GM12878 (cell line): ENCODE measurements at regions of chr1 and their contacts with region 1.

Region 1: DNA sequence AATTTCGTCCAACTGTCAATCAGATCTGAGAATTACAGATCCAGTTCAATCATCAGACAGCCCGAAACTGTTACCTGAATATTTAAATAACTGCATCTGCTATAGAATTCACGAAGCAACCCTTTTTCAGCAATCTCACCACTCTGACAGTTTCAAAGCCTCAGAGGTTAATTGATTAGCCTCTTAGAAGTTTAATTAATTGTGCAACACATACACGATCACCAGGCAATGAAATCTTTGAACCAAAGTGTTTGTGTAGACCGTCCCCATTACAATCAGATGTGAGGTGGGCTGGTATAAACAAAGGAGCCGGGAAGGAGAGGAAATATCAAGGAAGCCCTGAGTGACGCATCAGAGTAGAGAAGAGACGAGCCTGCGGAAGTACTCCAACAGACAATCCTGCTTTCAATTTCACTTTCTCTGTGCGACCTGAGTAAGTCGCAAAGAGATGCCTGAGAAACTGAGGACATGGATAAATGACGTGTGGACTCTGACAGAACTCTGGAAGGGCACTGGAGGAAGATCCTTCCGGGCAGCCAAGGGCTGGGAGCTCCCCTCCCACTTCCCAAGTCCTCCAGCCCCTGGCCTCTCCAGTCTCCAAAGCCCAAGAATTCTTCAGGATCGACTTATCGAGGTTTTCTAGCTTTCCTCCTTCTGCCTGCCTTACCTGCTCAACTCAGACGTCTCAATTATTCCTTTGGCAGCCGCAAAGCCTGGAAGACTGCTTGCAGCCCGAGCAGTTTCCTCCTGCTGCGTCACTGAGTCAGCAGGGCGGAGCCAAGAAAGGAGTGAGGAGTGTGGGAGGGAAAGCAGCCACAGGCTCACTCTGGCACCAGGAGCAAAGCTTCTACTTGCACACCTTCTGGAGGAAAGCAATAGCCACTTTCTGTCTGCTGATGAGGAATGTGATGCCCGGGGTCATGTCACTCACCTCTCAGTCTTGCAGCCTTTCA is at the start of gene RNASEL:
- DNase-seq: no peak
- ATAC-seq: peak; percentile 93
- H3K4me3 ChIP-seq: peak within 1 kb of the TSS; percentile 87
- H3K27ac ChIP-seq: peak within 1 kb of the TSS; percentile 63
- H3K4me1 ChIP-seq: peaks cover 5% of the 10 kb centered on the region; the same call in 1 of the 2 replicates
- H3K27me3 ChIP-seq: no peaks in the 10 kb centered on the region
- CTCF ChIP-seq: no peak
- EP300 ChIP-seq: no peak
- POLR2A ChIP-seq: peak; percentile 42
- RAD21 ChIP-seq: no peak
- polyA plus RNA-seq, gene RNASEL: 3.0 to 3.7 TPM

Region 2: GRCh38 chr1:182484591-182485257 is 104.1 kb before region 1 on chr1:
- CTCF ChIA-PET with region 1: interaction called, 4 read pairs
- POLR2A ChIA-PET with region 1: no interaction called
- RAD21 ChIA-PET with region 1: interaction called, 10 read pairs
- SMC1A ChIA-PET with region 1: interaction called, 3 read pairs
- in situ Hi-C with region 1: no loop called
- intact Hi-C with region 1: no loop called
- DNase-seq: peak; percentile 30
- ATAC-seq: peak; percentile 99
- H3K4me3 ChIP-seq: no peak overlapping the region
- H3K27ac ChIP-seq: no peak overlapping the region
- H3K4me1 ChIP-seq: no peaks in the 10 kb centered on the region
- H3K27me3 ChIP-seq: no peaks in the 10 kb centered on the region; a peak in 1 of 4 replicates
- CTCF ChIP-seq: peak; percentile 30 to 76 (median 70)
- EP300 ChIP-seq: no peak
- POLR2A ChIP-seq: no peak
- RAD21 ChIP-seq: peak; percentile 31; the same call in 1 of the 2 replicates

Region 3: DNA sequence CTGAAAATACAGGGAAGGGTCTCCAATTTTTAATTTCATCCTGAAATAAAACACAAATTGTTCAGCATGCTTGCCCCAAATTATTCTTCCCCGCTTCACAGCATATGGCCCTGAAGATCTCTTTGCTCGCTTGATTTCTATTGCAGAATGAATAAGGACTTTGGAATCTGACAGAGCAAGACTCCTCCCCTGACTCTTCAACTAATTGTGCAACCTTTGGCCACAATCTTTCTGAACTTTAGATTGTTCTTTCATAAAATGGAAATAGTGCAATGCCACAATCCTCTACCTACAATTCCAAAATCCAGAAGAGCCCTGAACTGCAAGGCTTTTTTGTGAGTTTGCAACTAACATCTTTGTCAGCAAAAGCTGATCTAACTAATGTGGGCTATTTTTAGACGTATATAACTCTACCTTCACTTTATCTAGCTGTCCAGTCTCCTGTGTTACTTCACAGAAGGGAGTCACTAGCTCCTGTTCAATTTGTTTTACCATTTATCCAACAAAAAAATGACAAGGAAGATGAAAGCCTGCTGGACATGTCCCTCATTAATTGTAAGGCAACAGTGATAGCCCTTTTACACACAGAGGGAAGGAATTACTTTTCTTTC is 13.1 kb before region 1 on chr1:
- CTCF ChIA-PET with region 1: interaction called, 6 read pairs
- POLR2A ChIA-PET with region 1: interaction called, 5 read pairs
- RAD21 ChIA-PET with region 1: no interaction called
- SMC1A ChIA-PET with region 1: interaction called, 10 read pairs
- in situ Hi-C with region 1: no loop called
- intact Hi-C with region 1: no loop called
- DNase-seq: no peak
- ATAC-seq: no peak
- H3K4me3 ChIP-seq: no peak overlapping the region
- H3K27ac ChIP-seq: no peak overlapping the region
- H3K4me1 ChIP-seq: no peaks in the 10 kb centered on the region
- H3K27me3 ChIP-seq: no peaks in the 10 kb centered on the region
- CTCF ChIP-seq: no peak
- EP300 ChIP-seq: no peak
- POLR2A ChIP-seq: no peak
- RAD21 ChIP-seq: no peak